Mammary epithelial cell (primary cell): ENCODE measurements at regions of chr6 and their contacts with region 1.

Region 1: GRCh38 chr6:37059344-37060206 is 54.1 kb downstream of the FGD2 start:
- DNase-seq: peak; percentile 98
- H3K4me3 ChIP-seq: peak overlapping the region in 2 of 3 experiments; percentile 16 to 27
- H3K27ac ChIP-seq: peak overlapping the region; percentile 83
- H3K4me1 ChIP-seq: peaks cover 51% of the 10 kb centered on the region
- H3K27me3 ChIP-seq: no peaks in the 10 kb centered on the region
- CTCF ChIP-seq: peak; percentile 64 to 87

Region 2: DNA sequence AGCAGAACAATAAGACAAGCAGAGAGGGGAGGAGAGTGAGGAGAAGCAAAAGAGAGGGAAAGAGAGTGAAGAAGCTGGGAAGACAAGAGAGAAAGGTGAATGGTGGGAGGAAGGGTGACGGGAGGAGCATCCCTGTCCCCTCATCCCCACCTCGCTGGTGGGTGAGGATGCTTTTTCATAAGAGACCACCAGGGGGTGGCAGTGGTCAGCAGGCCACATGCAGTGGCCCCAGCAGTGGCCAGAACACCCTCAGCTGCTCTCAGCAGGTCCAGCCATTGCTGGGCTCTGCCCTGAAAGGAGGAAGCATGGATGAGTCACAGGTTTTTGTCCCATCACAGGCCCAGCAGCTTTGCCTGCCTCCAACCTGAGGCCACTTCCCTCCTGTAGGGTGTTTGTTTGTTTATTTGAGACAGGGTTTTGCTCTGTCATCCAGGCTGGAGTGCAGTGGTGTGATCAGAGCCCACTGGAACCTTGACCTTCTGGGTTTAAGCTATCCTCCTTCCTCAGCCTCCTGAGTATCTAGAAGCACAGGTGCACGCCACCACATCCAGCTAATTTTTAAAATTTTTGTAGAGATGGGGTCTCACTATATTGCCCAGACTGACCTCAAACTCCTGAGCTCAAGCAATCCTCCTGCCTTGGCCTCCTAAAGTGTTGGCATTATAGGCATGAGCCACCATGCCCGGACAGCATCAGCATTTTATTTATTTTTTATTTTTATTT is 30.2 kb before region 1 on chr6:
- CTCF ChIA-PET with region 1: no interaction called
- dilution Hi-C with region 1: no loop called
- in situ Hi-C with region 1: loop called in 1 of 2 experiments (anchors 5 kb)
- intact Hi-C with region 1: loop called (anchors 1 kb)
- DNase-seq: peak; percentile 77
- H3K4me3 ChIP-seq: no peak overlapping the region
- H3K27ac ChIP-seq: no peak overlapping the region
- H3K4me1 ChIP-seq: peaks cover 26% of the 10 kb centered on the region
- H3K27me3 ChIP-seq: no peaks in the 10 kb centered on the region
- CTCF ChIP-seq: peak; percentile 28 to 60

Region 3: DNA sequence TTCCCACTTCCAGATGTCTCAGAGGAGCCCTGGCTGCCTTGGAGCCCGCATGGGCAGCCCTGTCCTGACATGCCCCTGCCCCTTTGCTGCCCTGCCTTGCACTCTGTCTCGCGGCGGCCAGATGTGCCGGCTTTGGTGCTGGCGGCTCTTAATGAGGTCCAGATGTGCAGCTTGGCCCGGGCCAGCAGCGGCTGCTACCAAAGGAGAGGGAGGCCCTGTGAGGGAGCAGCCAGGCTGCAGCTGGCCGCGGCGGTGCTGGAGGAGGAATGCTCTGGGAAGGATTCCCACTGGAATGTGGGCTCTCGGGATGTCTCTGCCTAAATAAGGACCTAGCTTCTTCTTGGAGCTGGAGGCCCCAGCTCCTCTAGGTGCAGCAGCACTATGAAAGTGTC is 18.3 kb after region 1 on chr6:
- CTCF ChIA-PET with region 1: interaction called, 8 read pairs
- dilution Hi-C with region 1: no loop called
- in situ Hi-C with region 1: no loop called
- intact Hi-C with region 1: loop called (anchors 2 kb)
- DNase-seq: peak; percentile 54
- H3K4me3 ChIP-seq: no peak overlapping the region
- H3K27ac ChIP-seq: no peak overlapping the region
- H3K4me1 ChIP-seq: peaks cover 12% of the 10 kb centered on the region
- H3K27me3 ChIP-seq: no peaks in the 10 kb centered on the region
- CTCF ChIP-seq: no peak

Region 4: GRCh38 chr6:37092923-37093920 is 33.6 kb after region 1 on chr6:
- CTCF ChIA-PET with region 1: no interaction called
- dilution Hi-C with region 1: no loop called
- in situ Hi-C with region 1: no loop called
- intact Hi-C with region 1: loop called (anchors 1 kb)
- DNase-seq: peak; percentile 68
- H3K4me3 ChIP-seq: no peak overlapping the region
- H3K27ac ChIP-seq: no peak overlapping the region
- H3K4me1 ChIP-seq: peaks cover 15% of the 10 kb centered on the region
- H3K27me3 ChIP-seq: no peaks in the 10 kb centered on the region
- CTCF ChIP-seq: no peak

Region 5: DNA sequence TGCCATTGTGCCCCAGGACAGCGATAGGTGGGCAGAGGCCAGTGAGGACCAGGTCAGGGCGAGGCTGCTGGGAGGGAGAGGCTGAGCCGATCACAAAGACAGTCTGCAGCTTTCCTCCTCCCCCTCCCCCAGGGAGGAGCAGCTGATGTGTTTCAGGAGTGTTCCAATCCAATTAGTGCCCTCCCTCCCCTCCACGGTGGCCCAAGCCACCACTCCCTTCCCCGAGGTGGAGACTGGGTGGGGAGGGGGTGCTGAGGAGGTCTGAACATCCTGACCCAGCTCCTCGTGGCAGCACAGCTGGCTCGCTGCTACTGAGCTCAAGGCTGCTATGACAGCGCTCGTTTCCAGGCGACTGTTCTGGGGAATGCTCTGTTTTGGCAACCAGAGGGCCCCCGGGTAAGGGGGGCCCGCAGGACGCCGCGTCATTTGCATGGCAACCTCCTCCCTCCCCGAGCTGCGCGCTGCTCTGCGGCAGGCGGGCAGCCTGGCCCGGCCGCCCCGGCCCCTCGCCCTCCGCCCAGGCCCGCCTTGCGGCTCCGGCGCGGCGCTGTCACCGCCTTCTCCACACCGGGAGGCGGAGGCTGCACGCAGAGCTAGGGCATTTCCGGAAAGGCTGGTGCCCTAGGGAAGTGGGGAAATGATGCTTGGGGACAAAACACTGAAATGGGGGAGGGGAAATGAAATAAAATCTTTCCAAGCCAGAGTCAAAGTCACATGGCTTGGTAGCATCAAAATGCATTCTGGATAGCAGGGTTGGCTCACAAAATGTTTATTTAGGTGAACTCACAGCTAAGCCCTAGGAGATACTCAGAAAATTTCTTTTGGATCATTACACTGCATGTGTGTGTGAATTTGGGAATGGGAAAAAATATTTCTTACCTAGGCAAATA is 42.9 kb after region 1 on chr6:
- CTCF ChIA-PET with region 1: no interaction called
- dilution Hi-C with region 1: no loop called
- in situ Hi-C with region 1: no loop called
- intact Hi-C with region 1: loop called (anchors 2 kb)
- DNase-seq: peak; percentile 74
- H3K4me3 ChIP-seq: peak overlapping the region; percentile 19 to 34 (median 22)
- H3K27ac ChIP-seq: peak overlapping the region; percentile 66
- H3K4me1 ChIP-seq: peaks cover 19% of the 10 kb centered on the region
- H3K27me3 ChIP-seq: no peaks in the 10 kb centered on the region
- CTCF ChIP-seq: no peak

Region 6: GRCh38 chr6:37137201-37138090 is 77.9 kb after region 1 on chr6:
- CTCF ChIA-PET with region 1: no interaction called
- dilution Hi-C with region 1: loop called (anchors 5 kb)
- in situ Hi-C with region 1: loop called in 1 of 2 experiments (anchors 5 kb)
- intact Hi-C with region 1: loop called (anchors 1 kb)
- DNase-seq: peak; percentile 96
- H3K4me3 ChIP-seq: no peak overlapping the region
- H3K27ac ChIP-seq: peak overlapping the region; percentile 86
- H3K4me1 ChIP-seq: peaks cover 44% of the 10 kb centered on the region
- H3K27me3 ChIP-seq: no peaks in the 10 kb centered on the region
- CTCF ChIP-seq: no peak